ENCODE measurements at regions of chr9 and their contacts with region 1.

Region 1: GRCh38 chr9:131270171-131271015 is 5.9 kb downstream of the FAM78A start:
- DNase-seq: peak; percentile 68
- CTCF ChIP-seq: no peak

Region 2: GRCh38 chr9:131253891-131254491 is 16.4 kb before region 1 on chr9:
- CTCF ChIA-PET with region 1: interaction called, 29 read pairs
- POLR2A ChIA-PET with region 1: no interaction called
- DNase-seq: peak; percentile 46
- CTCF ChIP-seq: no peak